ENCODE measurements at regions of chr3 and their contacts with region 1.

Region 1: DNA sequence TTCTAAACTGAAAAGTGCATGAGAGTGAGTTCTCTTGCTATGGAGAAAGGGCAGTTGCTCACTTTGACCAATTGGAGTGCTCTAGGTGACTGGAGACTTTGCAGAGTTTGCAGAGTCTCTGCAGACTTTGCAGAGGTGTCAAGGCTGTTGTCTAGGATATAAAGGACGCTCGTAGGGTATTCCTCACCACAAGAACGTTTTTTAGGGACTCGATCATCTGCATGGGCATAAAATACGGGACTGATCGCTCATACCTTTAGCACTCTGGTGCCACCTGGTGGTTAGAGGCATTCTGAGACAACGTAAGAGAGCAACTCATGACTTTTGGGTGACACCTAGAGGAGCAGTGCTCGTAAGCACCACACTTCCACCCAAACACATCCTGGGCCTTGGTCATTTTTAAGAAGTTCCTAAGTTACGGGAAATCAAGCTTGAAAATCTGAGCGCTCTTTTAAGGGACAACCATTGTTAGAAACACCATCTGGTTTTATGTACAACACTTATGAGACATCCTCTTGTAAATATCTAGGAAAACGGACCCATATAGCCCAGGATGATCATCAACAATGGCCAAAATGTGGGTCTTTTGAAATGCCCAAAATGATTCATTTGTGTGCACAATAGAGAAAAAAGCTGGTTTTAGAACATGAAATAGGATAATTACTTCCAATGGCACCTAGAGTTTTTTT is 51.6 kb upstream of the XCR1 start:
- DNase-seq: peak; percentile 98
- ATAC-seq: peak; percentile 83
- H3K4me3 ChIP-seq: peak overlapping the region; percentile 21; the same call in 1 of the 2 replicates
- H3K27ac ChIP-seq: no peak overlapping the region
- H3K4me1 ChIP-seq: peaks cover 49% of the 10 kb centered on the region
- H3K27me3 ChIP-seq: no peaks in the 10 kb centered on the region
- CTCF ChIP-seq: peak; percentile 100

Region 2: GRCh38 chr3:45167011-45167911 is 911.6 kb before region 1 on chr3:
- CTCF ChIA-PET with region 1: no interaction called
- POLR2A ChIA-PET with region 1: no interaction called
- intact Hi-C with region 1: no loop called
- DNase-seq: peak; percentile 99
- ATAC-seq: peak; percentile 93
- H3K4me3 ChIP-seq: peak overlapping the region; percentile 34; the same call in 1 of the 2 replicates
- H3K27ac ChIP-seq: peak overlapping the region; percentile 96
- H3K4me1 ChIP-seq: peaks cover 44% of the 10 kb centered on the region
- H3K27me3 ChIP-seq: no peaks in the 10 kb centered on the region
- CTCF ChIP-seq: no peak

Region 3: GRCh38 chr3:45760878-45761711 is 317.8 kb before region 1 on chr3:
- CTCF ChIA-PET with region 1: no interaction called
- POLR2A ChIA-PET with region 1: no interaction called
- intact Hi-C with region 1: loop called (anchors 2 kb)
- DNase-seq: peak; percentile 69
- ATAC-seq: peak; percentile 94
- H3K4me3 ChIP-seq: no peak overlapping the region
- H3K27ac ChIP-seq: no peak overlapping the region
- H3K4me1 ChIP-seq: 0 out of 2 replicates have a peak, but pooled peaks cover 7% of the 10 kb centered on the region
- H3K27me3 ChIP-seq: no peaks in the 10 kb centered on the region
- CTCF ChIP-seq: peak; percentile 91

Region 4: DNA sequence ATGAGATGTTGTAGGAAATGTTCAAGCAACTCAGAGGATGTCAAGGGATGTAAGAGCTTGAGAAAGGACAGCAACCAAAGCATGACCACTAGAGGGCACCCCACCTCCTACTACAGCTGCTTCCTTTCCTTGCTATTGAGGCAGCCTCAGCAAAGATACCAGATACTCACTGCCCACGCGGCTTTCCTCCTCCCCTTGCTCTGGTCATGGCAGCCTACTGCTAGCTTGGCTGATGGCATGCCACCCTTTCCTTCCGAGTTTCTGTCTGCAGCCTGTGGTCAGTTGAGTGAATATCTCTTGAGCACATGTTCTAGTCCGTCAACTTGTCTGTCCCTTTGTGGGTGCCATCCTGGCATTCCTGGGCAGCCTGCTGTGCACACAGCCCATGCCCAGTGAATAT is 140.0 kb before region 1 on chr3:
- CTCF ChIA-PET with region 1: interaction called, 24 read pairs
- POLR2A ChIA-PET with region 1: interaction called, 6 read pairs
- intact Hi-C with region 1: loop called (anchors 1 kb)
- DNase-seq: peak; percentile 89
- ATAC-seq: peak; percentile 84
- H3K4me3 ChIP-seq: no peak overlapping the region
- H3K27ac ChIP-seq: no peak overlapping the region
- H3K4me1 ChIP-seq: peaks cover 14% of the 10 kb centered on the region
- H3K27me3 ChIP-seq: no peaks in the 10 kb centered on the region
- CTCF ChIP-seq: peak; percentile 92

Region 5: DNA sequence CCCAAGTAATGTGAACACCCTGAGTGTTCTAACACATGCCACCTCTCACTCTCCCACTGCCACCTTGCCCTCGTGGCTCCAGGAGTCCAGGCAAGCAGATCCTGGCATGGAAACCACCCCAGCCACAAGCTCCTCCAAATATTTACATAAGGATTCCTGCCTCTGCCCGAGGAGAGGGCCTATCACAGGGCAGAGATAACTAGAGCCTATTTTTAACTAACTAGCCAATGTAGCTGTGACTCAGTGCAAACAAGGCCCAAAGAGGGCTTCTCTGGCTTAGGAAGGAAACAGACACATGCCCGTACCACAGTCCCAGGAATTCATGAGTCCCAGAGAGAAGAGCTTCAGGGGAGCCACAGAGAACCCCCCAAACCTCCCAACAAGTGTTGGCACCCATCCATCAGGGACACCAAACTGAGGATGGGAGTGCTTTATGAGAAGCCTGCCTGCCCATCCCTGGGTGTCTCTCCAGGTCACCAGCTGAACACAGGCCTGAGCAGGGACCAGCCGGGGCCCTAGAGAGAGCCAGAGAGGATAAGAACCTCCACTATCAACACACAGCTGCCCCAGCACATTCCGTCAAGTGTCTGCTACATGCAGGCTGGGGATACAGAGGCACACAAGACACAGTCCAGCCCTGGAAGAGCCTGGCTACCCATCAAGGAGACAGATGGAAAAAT is 92.4 kb before region 1 on chr3:
- CTCF ChIA-PET with region 1: interaction called, 4 read pairs
- POLR2A ChIA-PET with region 1: no interaction called
- intact Hi-C with region 1: loop called (anchors 1 kb)
- DNase-seq: peak; percentile 93
- ATAC-seq: peak; percentile 97
- H3K4me3 ChIP-seq: peak overlapping the region; percentile 5; the same call in 1 of the 2 replicates
- H3K27ac ChIP-seq: peak overlapping the region; percentile 90
- H3K4me1 ChIP-seq: peaks cover 61% of the 10 kb centered on the region
- H3K27me3 ChIP-seq: no peaks in the 10 kb centered on the region
- CTCF ChIP-seq: no peak

Region 6: GRCh38 chr3:46208167-46208704 is 129.4 kb after region 1 on chr3 and contains the start of gene CCR1:
- CTCF ChIA-PET with region 1: interaction called, 3 read pairs
- POLR2A ChIA-PET with region 1: no interaction called
- intact Hi-C with region 1: loop called (anchors 2 kb)
- DNase-seq: peak; percentile 78
- ATAC-seq: peak; percentile 79
- H3K4me3 ChIP-seq: no peak within 1 kb of the TSS
- H3K27ac ChIP-seq: no peak within 1 kb of the TSS
- H3K4me1 ChIP-seq: peaks cover 5% of the 10 kb centered on the region; the same call in 1 of the 2 replicates
- H3K27me3 ChIP-seq: no peaks in the 10 kb centered on the region
- CTCF ChIP-seq: peak; percentile 94
- total RNA-seq, gene CCR1: 0.15 TPM in 1 of 2 replicates, not detected in the other